ENCODE measurements at regions of chr12 and their contacts with region 1.

Region 1: DNA sequence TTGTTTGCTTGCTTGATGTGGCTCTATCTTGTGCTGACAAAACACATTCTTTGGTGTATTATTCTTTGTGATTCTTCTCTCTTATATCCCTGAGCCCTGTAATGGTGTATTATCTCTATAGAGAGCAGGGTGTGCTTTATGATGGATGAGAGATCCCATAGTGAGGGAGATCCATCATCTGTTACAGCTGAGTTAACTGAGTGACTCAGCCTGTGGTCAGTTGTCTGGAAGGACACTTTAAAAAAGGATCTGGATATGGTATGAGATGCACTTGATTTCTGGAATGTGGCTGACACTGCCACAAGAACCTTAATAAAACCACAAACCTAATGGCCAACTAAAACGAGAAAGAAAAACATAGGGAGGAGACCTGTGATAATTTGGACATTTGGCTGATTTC is 461.4 kb upstream of the SYT1 start:
- DNase-seq: peak; percentile 16
- H3K4me3 ChIP-seq: peak overlapping the region in 1 of 2 experiments; percentile 21; a peak in 2 of 4 replicates
- H3K27ac ChIP-seq: peak overlapping the region; percentile 88 to 96
- H3K4me1 ChIP-seq: peaks cover 2 to 5% of the 10 kb centered on the region in 2 experiments; a peak in 2 of 4 replicates
- H3K27me3 ChIP-seq: no peaks in the 10 kb centered on the region
- CTCF ChIP-seq: no peak
- EP300 ChIP-seq: peak in 1 of 2 experiments; percentile 98; a peak in 2 of 4 replicates
- RAD21 ChIP-seq: no peak

Region 2: GRCh38 chr12:78392918-78393317 is 10.2 kb before region 1 on chr12:
- CTCF ChIA-PET with region 1: interaction called, 13 read pairs
- POLR2A ChIA-PET with region 1: interaction called, 3 read pairs
- DNase-seq: peak; percentile 5
- H3K4me3 ChIP-seq: no peak overlapping the region
- H3K27ac ChIP-seq: peak overlapping the region in 1 of 2 experiments; percentile 47; a peak in 1 of 4 replicates
- H3K4me1 ChIP-seq: no peaks in the 10 kb centered on the region; a peak in 3 of 4 replicates
- H3K27me3 ChIP-seq: no peaks in the 10 kb centered on the region
- CTCF ChIP-seq: peak; percentile 59
- EP300 ChIP-seq: no peak
- RAD21 ChIP-seq: peak; percentile 76

Region 3: DNA sequence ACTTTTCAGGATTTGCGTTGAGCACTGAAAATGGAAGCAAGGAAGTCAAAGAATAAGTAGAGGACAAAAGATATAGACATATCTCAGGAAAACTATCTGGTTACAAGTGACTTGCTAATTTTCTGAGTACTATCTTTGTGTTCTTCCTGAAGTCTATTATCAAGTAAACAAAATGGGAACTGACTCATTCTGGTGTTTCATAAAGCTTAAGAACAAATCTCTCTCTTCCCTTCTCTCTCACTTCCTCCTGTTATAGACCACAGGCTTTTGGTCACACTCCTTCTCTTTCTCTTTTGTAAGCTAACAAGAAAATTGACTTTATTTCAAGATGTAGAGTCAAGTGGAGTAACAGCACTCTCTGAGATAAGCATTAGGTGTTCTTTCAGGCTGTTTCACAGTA is 54.8 kb after region 1 on chr12:
- CTCF ChIA-PET with region 1: no interaction called
- POLR2A ChIA-PET with region 1: no interaction called
- DNase-seq: no peak
- H3K4me3 ChIP-seq: no peak overlapping the region
- H3K27ac ChIP-seq: no peak overlapping the region
- H3K4me1 ChIP-seq: no peaks in the 10 kb centered on the region
- H3K27me3 ChIP-seq: no peaks in the 10 kb centered on the region
- CTCF ChIP-seq: no peak
- EP300 ChIP-seq: no peak
- RAD21 ChIP-seq: no peak

Measured in SK-N-SH (cell line).